ENCODE measurements at regions of chr7 and their contacts with region 1.

Region 1: GRCh38 chr7:4753711-4754432 is 21.6 kb upstream of the AP5Z1 start:
- DNase-seq: peak; percentile 79
- ATAC-seq: peak; percentile 99
- H3K4me3 ChIP-seq: no peak overlapping the region
- H3K27ac ChIP-seq: no peak overlapping the region
- H3K4me1 ChIP-seq: no peaks in the 10 kb centered on the region
- H3K27me3 ChIP-seq: no peaks in the 10 kb centered on the region
- CTCF ChIP-seq: peak; percentile 89

Region 2: DNA sequence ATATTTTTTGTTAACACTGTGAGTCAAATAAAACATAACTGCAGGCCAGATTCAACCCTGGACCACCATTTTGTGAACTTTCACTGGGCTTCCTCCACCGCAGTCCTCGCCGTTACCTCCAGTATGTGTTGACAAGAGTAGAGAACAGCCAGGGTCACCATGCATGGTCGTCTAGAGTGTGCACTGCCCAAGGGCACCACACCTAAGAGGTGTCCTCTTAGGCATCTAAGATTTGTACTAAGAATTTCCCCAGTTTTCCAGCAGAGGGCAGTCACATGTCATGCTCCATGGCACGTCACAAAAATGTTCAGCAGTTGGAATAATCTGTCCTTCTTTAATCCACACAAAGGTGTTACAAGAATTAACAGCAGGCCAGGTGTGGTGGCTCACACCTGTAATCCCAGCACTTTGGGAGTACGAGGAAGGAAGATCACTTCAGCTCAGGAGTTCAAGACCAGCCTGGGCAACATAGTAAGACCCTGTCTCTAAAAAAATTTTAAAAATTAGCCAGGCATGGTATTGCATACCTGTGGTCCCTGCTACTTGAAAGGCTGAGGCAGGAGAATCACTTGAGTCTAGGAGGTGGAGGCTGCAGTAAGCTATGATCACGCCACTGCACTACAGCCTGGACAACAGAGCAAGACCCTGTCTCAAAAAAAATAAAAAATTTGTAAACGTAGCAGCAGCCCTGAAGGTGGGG is 143.0 kb before region 1 on chr7:
- CTCF ChIA-PET with region 1: no interaction called
- POLR2A ChIA-PET with region 1: no interaction called
- intact Hi-C with region 1: loop called (anchors 1 kb)
- DNase-seq: peak; percentile 83
- ATAC-seq: peak; percentile 97
- H3K4me3 ChIP-seq: no peak overlapping the region
- H3K27ac ChIP-seq: no peak overlapping the region
- H3K4me1 ChIP-seq: 0 out of 2 replicates have a peak, but pooled peaks cover 3% of the 10 kb centered on the region
- H3K27me3 ChIP-seq: no peaks in the 10 kb centered on the region
- CTCF ChIP-seq: peak; percentile 78

Region 3: DNA sequence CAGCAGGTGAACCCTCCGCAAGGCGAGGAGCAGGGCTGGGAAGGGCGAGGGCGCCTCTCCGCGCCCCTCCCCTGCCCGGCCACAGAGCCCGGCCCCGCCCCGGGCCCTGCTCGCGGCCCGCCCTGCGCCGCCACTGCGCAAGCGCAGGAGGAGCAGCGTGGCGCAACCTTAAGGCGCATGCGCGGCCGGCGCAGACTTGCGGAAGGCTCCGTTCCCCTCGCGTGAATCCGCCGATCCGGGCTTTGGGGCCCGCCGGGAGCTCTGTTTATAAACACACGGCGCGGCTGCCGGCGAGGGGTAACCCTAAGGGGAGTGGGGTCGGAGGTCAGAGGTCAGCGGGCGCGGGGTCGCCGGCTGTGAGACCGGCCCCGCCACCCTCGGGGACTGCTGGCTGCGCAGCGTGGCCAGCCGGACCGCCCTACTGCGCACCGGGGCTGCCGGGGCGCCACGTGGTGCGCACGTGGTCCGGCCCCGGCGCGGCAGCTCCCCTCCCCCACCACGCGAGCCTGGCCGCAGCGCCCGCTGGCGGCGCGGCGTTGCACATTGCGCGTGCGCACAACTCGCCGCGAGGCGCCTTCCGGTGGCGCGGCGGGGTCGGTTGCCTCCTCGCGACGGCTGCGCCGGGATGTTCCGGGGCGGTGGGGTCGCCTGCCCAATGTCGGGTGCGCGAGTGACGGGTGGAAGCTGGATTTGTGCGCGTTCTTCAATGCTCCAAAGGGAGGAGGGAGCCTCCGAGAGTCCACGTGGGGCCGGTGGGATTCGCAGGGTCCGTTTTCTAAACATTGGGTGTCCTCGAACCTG is 112.0 kb before region 1 on chr7:
- CTCF ChIA-PET with region 1: interaction called, 3 read pairs
- POLR2A ChIA-PET with region 1: no interaction called
- intact Hi-C with region 1: loop called (anchors 2 kb)
- DNase-seq: peak; percentile 95
- ATAC-seq: peak; percentile 97
- H3K4me3 ChIP-seq: peak overlapping the region; percentile 67
- H3K27ac ChIP-seq: peak overlapping the region; percentile 44; the same call in 1 of the 2 replicates
- H3K4me1 ChIP-seq: peaks cover 8% of the 10 kb centered on the region
- H3K27me3 ChIP-seq: no peaks in the 10 kb centered on the region
- CTCF ChIP-seq: peak; percentile 36; the same call in 1 of the 2 replicates

Region 4: GRCh38 chr7:4996696-4997222 is 242.9 kb after region 1 on chr7:
- CTCF ChIA-PET with region 1: no interaction called
- POLR2A ChIA-PET with region 1: no interaction called
- intact Hi-C with region 1: no loop called
- DNase-seq: no peak
- ATAC-seq: no peak; the same call in 1 of the 2 replicates
- H3K4me3 ChIP-seq: no peak overlapping the region
- H3K27ac ChIP-seq: no peak overlapping the region
- H3K4me1 ChIP-seq: no peaks in the 10 kb centered on the region
- H3K27me3 ChIP-seq: no peaks in the 10 kb centered on the region
- CTCF ChIP-seq: peak; percentile 28; the same call in 1 of the 2 replicates

Measured in PC-3 (cell line).